CD14-positive monocyte (primary cell): ENCODE measurements at regions of chr3 and their contacts with region 1.

Region 1: DNA sequence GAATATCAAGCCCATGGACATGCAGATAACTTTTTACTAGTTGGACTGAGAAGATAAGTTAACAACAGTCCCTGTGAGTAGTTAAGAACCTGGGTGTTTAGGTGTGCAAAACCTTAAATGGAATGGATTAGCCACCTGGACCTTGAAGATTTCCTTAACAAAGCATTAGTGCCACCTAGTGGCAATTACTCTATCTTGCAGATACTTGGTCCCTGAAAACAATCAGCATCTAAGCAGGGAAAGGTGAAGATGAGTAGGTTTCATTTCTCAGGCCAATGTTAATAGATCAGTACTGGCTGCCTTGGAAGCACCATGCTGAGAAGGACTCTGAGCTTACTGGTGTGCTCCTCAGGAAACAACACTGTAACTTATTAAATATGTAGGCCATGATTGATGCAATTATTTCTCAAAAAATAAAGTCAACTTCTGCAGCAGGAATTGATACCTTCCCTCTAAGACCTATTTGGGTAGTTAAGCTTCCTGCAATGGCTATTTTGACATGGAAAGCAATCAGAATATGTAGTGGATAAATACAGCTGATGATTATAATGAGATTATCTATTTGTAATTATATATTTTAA is 329.4 kb downstream of the TBC1D5 start:
- DNase-seq: peak; percentile 18 to 53 (median 43)
- H3K4me3 ChIP-seq: no peak overlapping the region
- H3K4me3 Mint-ChIP-seq: no peak overlapping the region
- H3K27ac ChIP-seq: no peak overlapping the region
- H3K27ac Mint-ChIP-seq: no peak overlapping the region
- H3K4me1 ChIP-seq: no peaks in the 10 kb centered on the region
- H3K4me1 Mint-ChIP-seq: no peaks in the 10 kb centered on the region
- H3K27me3 ChIP-seq: no peaks in the 10 kb centered on the region
- H3K27me3 Mint-ChIP-seq: no peaks in the 10 kb centered on the region
- CTCF ChIP-seq: peak; percentile 87

Region 2: DNA sequence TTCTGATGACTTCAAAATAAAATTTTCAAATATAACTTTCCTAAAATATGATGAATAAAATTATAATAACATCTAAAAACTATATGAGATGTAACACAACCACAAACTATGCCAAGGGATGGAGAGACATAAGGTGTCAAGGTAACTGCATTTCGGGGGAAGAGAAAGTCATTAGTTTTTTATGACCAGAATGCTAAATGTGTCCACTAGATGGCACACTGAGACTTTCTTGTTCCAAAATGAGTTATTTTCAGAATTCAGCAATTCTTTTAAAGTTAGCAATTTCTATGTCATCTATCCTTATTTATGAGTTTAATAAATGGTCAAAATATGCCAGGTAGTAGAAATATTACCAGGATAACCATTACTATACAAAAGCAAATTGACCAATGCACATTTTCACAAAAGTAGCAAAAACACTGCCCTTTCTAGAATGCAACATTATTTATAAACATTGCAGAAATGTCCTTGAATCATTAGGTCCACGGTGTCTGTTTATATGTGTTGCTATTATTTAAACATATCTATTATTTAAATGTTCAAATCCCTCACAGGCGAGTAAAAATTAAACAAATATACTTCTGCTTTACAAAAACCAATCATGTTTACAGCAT is 154.1 kb before region 1 on chr3:
- intact Hi-C with region 1: loop called in 1 of 2 experiments (anchors 10 kb)
- DNase-seq: peak; percentile 6 to 48 (median 25)
- H3K4me3 ChIP-seq: no peak overlapping the region
- H3K4me3 Mint-ChIP-seq: no peak overlapping the region
- H3K27ac ChIP-seq: no peak overlapping the region
- H3K27ac Mint-ChIP-seq: no peak overlapping the region
- H3K4me1 ChIP-seq: no peaks in the 10 kb centered on the region
- H3K4me1 Mint-ChIP-seq: no peaks in the 10 kb centered on the region
- H3K27me3 ChIP-seq: no peaks in the 10 kb centered on the region
- H3K27me3 Mint-ChIP-seq: no peaks in the 10 kb centered on the region
- CTCF ChIP-seq: peak; percentile 83

Region 3: DNA sequence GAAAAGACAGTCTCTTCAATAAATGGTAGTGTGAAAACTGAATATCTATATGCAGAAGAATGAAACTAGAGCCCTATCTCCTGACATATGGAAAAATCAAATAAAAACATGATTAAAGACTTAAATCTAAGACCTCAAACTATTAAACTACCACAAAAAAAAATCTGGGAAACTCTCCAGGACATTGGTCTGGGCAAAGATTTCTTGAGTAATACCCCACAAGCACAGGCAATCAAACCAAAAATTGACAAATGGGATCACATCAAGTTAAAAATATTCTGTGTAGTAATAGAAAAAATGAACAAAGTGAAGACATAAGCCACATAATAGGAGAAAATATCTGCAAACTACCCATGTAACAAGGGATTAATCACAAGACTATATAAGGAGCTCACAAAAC is 43.0 kb after region 1 on chr3:
- intact Hi-C with region 1: no loop called
- DNase-seq: no peak
- H3K4me3 ChIP-seq: no peak overlapping the region
- H3K4me3 Mint-ChIP-seq: no peak overlapping the region
- H3K27ac ChIP-seq: no peak overlapping the region
- H3K27ac Mint-ChIP-seq: no peak overlapping the region
- H3K4me1 ChIP-seq: no peaks in the 10 kb centered on the region
- H3K4me1 Mint-ChIP-seq: peaks cover 5% of the 10 kb centered on the region
- H3K27me3 ChIP-seq: no peaks in the 10 kb centered on the region
- H3K27me3 Mint-ChIP-seq: no peaks in the 10 kb centered on the region
- CTCF ChIP-seq: no peak